Posterior vena cava (tissue), 2 donors: ENCODE measurements at regions of chr19 and their contacts with region 1.

Region 1: GRCh38 chr19:4533835-4534424 is 1.1 kb downstream of the PLIN5 start:
- DNase-seq: no peak

Region 2: DNA sequence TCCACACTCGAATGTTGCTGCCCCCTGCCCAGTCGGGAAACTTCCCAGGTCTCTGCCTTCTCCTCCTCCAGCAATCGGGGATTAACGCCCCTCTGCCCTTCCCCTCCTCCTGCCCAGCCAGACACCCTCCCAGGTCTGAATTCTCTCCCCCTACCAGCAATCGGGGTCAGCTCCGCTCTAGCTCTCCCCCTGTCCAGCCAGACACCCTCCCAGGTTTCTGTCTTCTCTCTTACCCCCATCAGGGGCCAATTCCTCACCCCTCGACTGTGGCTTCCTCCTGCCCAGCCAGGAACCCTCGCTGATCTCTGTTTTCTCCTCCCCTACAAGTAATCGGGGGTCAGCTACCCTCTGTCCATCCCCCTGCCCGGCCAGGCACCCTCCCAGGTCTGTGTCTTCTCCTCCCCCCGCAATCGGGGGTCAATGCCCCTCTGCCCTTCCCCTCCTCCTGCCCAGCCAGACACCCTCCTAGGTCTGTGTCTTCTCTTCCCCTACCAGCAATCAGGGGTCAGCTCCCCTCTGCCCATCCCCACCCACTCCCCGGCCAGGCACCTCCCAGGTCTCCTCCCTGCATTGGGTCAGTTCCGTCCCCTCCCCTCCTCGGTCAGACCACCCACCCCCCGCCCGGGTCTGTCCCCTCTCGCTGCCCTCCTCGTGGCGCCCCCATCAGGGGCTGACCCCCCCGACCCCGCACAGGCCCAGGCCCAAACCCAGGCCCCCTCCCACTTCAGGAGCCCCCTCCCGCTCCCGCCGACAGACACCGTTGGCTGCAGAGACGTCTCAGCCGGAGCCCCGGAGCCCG is 665.8 kb before region 1 on chr19:
- intact Hi-C with region 1: no loop called
- DNase-seq: no peak

Region 3: DNA sequence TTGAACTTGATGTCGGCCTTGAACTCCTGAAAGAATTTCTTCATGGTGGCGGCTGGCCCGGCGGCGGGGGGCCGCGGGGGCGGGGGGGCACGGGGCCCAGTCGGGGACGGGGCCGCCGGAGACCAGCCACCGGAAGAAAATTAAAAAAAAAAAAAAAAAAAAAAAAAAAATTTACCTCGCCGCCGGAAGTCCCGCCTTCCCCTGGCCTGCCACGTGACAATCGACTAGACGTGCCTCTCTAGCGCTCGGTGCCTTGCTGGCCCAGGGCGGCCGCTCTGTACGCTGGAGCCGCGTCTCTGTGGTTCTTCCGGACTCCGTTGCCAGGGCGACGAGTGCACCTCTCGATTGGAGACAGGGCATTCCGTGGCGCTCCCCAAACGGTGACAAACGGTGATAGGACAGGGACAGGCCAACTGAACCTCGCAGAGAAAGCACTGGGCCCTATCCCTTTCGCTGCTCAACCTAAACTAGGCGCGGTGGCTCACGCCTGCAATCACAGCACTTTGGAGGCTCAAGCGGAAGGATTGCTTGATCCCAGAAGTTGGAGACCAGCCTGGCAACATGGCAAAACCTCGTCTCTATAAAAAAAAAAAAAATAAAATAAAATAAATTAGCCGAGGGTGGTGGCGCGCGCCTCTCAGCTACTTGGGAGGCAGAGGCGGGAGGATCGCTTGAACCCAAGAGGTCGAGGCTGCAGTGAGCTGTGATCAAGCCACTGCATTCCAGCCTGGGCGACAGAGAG is 76.1 kb before region 1 on chr19 and contains the start of gene UBXN6:
- intact Hi-C with region 1: loop called in 1 of 2 experiments (anchors 1 kb)
- DNase-seq: peak; percentile 99
- total RNA-seq, gene UBXN6: 85.1 to 85.5 TPM

Region 4: GRCh38 chr19:4504297-4505259 is 29.4 kb before region 1 on chr19:
- intact Hi-C with region 1: loop called in 1 of 2 experiments (anchors 1 kb)
- DNase-seq: no peak